ENCODE measurements at regions of chr16 and their contacts with region 1.

Region 1: GRCh38 chr16:48123104-48123788 is 32.5 kb downstream of the ABCC12 start:
- DNase-seq: peak; percentile 87
- H3K4me3 Mint-ChIP-seq: no peak overlapping the region
- H3K27ac Mint-ChIP-seq: no peak overlapping the region
- H3K4me1 Mint-ChIP-seq: peaks cover 29% of the 10 kb centered on the region
- H3K27me3 Mint-ChIP-seq: peaks cover 12% of the 10 kb centered on the region

Region 2: GRCh38 chr16:47110939-47111338 is 1012.3 kb before region 1 on chr16:
- CTCF ChIA-PET with region 1: no interaction called
- POLR2A ChIA-PET with region 1: no interaction called
- intact Hi-C with region 1: loop called (anchors 1 kb)
- DNase-seq: no peak
- H3K4me3 Mint-ChIP-seq: no peak overlapping the region
- H3K27ac Mint-ChIP-seq: no peak overlapping the region
- H3K4me1 Mint-ChIP-seq: peaks cover 21% of the 10 kb centered on the region
- H3K27me3 Mint-ChIP-seq: no peaks in the 10 kb centered on the region

Region 3: DNA sequence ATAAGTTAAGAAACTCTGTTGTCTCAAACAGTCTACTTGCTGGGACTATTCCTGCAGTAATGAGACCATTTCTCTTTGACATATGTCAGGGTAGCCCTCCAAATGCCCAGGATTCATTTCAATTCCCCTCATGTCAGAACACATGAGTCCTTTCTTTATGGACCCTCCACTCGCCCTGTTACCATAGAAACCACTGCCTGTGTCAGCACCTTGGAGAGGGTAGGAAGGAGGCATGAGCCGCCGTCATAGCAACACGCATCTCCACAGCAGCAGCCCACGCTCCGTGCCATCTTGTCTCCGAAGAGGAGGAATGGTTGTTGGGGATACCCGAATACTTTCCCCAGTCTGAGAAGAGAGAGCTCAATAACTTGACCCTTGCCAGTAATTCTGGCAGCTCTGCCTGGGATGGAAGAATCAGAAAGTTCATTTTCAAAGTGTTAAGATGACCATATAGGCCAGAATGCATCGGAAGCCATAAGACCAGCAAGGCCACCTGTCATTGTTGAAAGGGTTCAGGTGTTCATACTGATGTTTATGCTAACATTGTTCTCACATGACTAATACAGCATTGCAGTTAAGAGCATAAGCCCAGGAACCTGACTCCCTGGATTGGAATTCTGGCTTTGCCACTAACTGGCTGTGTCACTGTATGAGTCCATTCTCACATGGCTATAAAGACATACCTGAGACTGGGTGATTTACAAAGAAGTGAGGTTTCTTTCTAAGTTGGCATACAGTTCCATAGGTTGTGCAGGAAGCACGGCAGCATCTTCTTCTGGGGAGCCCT is 108.7 kb before region 1 on chr16:
- CTCF ChIA-PET with region 1: no interaction called
- POLR2A ChIA-PET with region 1: no interaction called
- intact Hi-C with region 1: no loop called
- DNase-seq: no peak
- H3K4me3 Mint-ChIP-seq: no peak overlapping the region
- H3K27ac Mint-ChIP-seq: no peak overlapping the region
- H3K4me1 Mint-ChIP-seq: no peaks in the 10 kb centered on the region
- H3K27me3 Mint-ChIP-seq: no peaks in the 10 kb centered on the region

Region 4: DNA sequence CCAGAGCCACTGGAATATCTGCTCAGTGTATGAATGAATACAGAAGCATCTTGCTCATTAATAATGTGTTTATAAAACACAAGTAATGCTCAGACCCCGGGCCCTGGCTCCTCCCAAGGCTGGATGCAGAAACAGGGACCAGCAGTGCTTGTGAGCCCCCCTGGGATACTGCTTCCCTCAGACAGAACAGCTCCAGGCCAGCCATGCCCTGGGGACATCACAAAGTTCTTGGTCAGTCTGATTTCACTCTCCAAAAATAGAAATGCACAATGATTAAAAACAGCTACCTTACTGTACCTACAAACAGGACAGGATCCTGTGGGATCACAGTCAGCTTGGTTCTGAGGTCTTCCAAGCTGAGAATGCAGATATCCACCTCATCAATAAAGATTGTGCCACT is 35.6 kb before region 1 on chr16:
- CTCF ChIA-PET with region 1: no interaction called
- POLR2A ChIA-PET with region 1: no interaction called
- intact Hi-C with region 1: no loop called
- DNase-seq: no peak
- H3K4me3 Mint-ChIP-seq: no peak overlapping the region
- H3K27ac Mint-ChIP-seq: no peak overlapping the region
- H3K4me1 Mint-ChIP-seq: no peaks in the 10 kb centered on the region
- H3K27me3 Mint-ChIP-seq: peaks cover 8% of the 10 kb centered on the region

Region 5: DNA sequence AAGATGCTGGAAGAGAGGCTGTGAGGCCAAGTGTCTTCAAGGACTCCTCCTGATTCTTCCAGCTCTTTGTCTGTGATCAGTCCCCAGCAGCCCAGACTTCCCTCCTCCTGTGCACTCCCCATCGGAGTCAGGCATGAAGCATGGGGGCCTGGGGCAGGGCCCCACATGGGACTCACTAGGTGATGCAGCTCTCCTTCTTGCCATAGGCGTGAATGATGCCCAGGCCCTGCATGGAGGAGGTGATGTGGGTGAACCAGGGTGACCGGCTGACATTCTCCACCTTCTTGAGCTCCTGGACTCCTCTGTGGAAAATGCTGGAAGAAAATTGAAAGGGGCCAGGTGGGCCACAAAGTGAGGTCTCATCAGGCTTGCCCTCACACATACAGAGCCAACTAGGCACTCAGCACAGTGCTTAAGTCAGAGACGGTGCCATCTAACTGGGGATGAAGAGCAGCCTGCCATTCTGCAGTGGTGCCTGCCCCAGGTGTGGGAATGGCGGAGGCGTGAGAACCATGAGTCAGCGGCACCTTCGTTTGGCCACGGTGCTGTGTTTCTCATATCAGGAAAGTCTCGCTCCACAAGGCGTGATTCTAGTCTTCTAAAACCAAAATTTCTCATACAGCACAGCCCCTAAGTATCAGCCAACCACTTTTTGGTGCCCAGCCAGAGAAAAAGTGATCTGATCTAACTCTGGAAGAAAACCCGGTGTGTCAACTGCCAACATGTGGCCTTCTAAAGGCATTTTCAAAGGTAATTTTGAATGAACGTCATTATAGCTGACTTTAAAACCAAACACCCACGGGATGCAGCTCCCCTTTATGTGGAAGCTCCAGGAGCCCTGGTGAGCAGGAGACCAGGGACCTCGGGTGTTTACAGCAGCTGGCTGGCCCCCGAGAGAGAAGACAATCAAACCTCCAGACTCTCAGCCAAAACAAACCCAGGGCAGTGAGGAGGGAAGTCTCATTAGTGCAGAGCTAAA is 22.3 kb before region 1 on chr16:
- CTCF ChIA-PET with region 1: interaction called, 6 read pairs
- POLR2A ChIA-PET with region 1: no interaction called
- intact Hi-C with region 1: loop called (anchors 2 kb)
- DNase-seq: peak; percentile 86
- H3K4me3 Mint-ChIP-seq: no peak overlapping the region
- H3K27ac Mint-ChIP-seq: no peak overlapping the region
- H3K4me1 Mint-ChIP-seq: peaks cover 18% of the 10 kb centered on the region
- H3K27me3 Mint-ChIP-seq: peaks cover 32% of the 10 kb centered on the region

Measured in activated CD4-positive, alpha-beta memory T cell treated with anti-CD3 and anti-CD28 coated beads for 36 hours (primary cell).